ENCODE measurements at regions of chr6 and their contacts with region 1.

Region 1: GRCh38 chr6:24991810-24992467 is 56.2 kb upstream of the RIPOR2 start:
- DNase-seq: peak; percentile 46 to 89 (median 75)
- ATAC-seq: peak; percentile 87 to 93 (median 91)
- H3K4me3 ChIP-seq: no peak overlapping the region
- H3K4me3 Mint-ChIP-seq: peak overlapping the region; percentile 17 to 63 (median 47)
- H3K27ac ChIP-seq: peak overlapping the region; percentile 48
- H3K27ac Mint-ChIP-seq: peak overlapping the region; percentile 94
- H3K4me1 ChIP-seq: peaks cover 26 to 29% of the 10 kb centered on the region in 2 experiments
- H3K4me1 Mint-ChIP-seq: peaks cover 78 to 80% (median 78%) of the 10 kb centered on the region in 3 donors
- H3K27me3 ChIP-seq: no peaks in the 10 kb centered on the region
- H3K27me3 Mint-ChIP-seq: no peaks in the 10 kb centered on the region

Region 2: GRCh38 chr6:24864343-24864742 is 127.6 kb before region 1 on chr6:
- CTCF ChIA-PET with region 1: interaction called, 12 to 13 read pairs
- POLR2A ChIA-PET with region 1: interaction called, 3 to 5 read pairs
- DNase-seq: no peak
- ATAC-seq: no peak
- H3K4me3 ChIP-seq: no peak overlapping the region
- H3K4me3 Mint-ChIP-seq: peak overlapping the region in 1 of 3 donors; percentile 17
- H3K27ac ChIP-seq: peak overlapping the region; percentile 45
- H3K27ac Mint-ChIP-seq: peak overlapping the region; percentile 94 to 97
- H3K4me1 ChIP-seq: peaks cover 66 to 81% of the 10 kb centered on the region in 2 experiments
- H3K4me1 Mint-ChIP-seq: peaks cover 97 to 100% (median 97%) of the 10 kb centered on the region in 3 donors
- H3K27me3 ChIP-seq: no peaks in the 10 kb centered on the region
- H3K27me3 Mint-ChIP-seq: no peaks in the 10 kb centered on the region

Region 3: GRCh38 chr6:24910961-24911712 is 80.8 kb before region 1 on chr6:
- CTCF ChIA-PET with region 1: interaction called, 10 to 39 read pairs
- POLR2A ChIA-PET with region 1: interaction called in 1 of 2 experiments, 7 read pairs
- DNase-seq: peak in 30 of 35 experiments; percentile 29 to 72 (median 48)
- ATAC-seq: peak; percentile 32 to 50 (median 36)
- H3K4me3 ChIP-seq: peak overlapping the region; percentile 57 to 60
- H3K4me3 Mint-ChIP-seq: peak overlapping the region; percentile 88 to 93 (median 90)
- H3K27ac ChIP-seq: peak overlapping the region; percentile 79
- H3K27ac Mint-ChIP-seq: peak overlapping the region; percentile 98 to 99
- H3K4me1 ChIP-seq: peaks cover 74 to 87% of the 10 kb centered on the region in 2 experiments
- H3K4me1 Mint-ChIP-seq: peaks cover 96 to 100% (median 97%) of the 10 kb centered on the region in 3 donors
- H3K27me3 ChIP-seq: no peaks in the 10 kb centered on the region
- H3K27me3 Mint-ChIP-seq: no peaks in the 10 kb centered on the region

Region 4: GRCh38 chr6:24933868-24934401 is 58.0 kb before region 1 on chr6:
- CTCF ChIA-PET with region 1: interaction called, 48 to 160 read pairs
- POLR2A ChIA-PET with region 1: interaction called, 12 to 22 read pairs
- DNase-seq: peak in 17 of 35 experiments; percentile 26 to 82 (median 49)
- ATAC-seq: peak in 3 of 4 experiments; percentile 8 to 23 (median 12)
- H3K4me3 ChIP-seq: peak overlapping the region; percentile 93 to 94
- H3K4me3 Mint-ChIP-seq: peak overlapping the region; percentile 93 to 98 (median 96)
- H3K27ac ChIP-seq: peak overlapping the region; percentile 65
- H3K27ac Mint-ChIP-seq: peak overlapping the region; percentile 97 to 100
- H3K4me1 ChIP-seq: peaks cover 39 to 55% of the 10 kb centered on the region in 2 experiments
- H3K4me1 Mint-ChIP-seq: peaks cover 55 to 73% (median 62%) of the 10 kb centered on the region in 3 donors
- H3K27me3 ChIP-seq: no peaks in the 10 kb centered on the region
- H3K27me3 Mint-ChIP-seq: no peaks in the 10 kb centered on the region

Region 5: DNA sequence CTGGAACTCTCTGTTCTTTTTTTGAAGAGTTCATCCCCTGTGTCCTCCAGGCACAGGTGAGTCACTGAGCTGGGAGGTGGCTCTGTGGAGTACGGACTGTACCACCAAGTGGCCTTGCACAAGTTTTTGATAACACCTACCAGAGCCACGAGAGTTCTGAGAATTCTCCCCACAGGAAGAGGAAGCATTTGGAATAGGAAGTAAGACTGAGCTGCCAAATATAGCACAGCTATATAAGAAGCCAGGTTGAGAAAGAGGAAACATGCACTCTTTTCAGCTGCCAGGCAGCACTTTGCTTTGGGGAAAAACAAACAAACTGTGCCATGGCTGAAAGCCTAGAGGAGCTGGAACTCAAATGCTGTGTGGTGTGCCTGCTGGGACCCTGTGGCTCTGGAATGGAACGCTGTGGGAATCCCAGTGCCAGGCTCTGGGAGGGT is 14.6 kb after region 1 on chr6:
- CTCF ChIA-PET with region 1: interaction called, 3 to 22 read pairs
- POLR2A ChIA-PET with region 1: no interaction called
- DNase-seq: peak in 16 of 35 experiments; percentile 7 to 54 (median 20)
- ATAC-seq: peak; percentile 72 to 80 (median 75)
- H3K4me3 ChIP-seq: peak overlapping the region in 1 of 2 donors; percentile 20
- H3K4me3 Mint-ChIP-seq: peak overlapping the region in 2 of 3 donors; percentile 38 to 68
- H3K27ac ChIP-seq: peak overlapping the region; percentile 84
- H3K27ac Mint-ChIP-seq: peak overlapping the region; percentile 88 to 91
- H3K4me1 ChIP-seq: peaks cover 49 to 61% of the 10 kb centered on the region in 2 experiments
- H3K4me1 Mint-ChIP-seq: peaks cover 79 to 99% (median 80%) of the 10 kb centered on the region in 3 donors
- H3K27me3 ChIP-seq: no peaks in the 10 kb centered on the region
- H3K27me3 Mint-ChIP-seq: no peaks in the 10 kb centered on the region

Region 6: GRCh38 chr6:25056130-25056529 is 64.2 kb after region 1 on chr6:
- CTCF ChIA-PET with region 1: interaction called in 1 of 2 experiments, 5 read pairs
- POLR2A ChIA-PET with region 1: interaction called in 1 of 2 experiments, 11 read pairs
- DNase-seq: peak; percentile 31 to 89 (median 63)
- ATAC-seq: peak; percentile 79 to 99 (median 97)
- H3K4me3 ChIP-seq: peak overlapping the region; percentile 18 to 30
- H3K4me3 Mint-ChIP-seq: peak overlapping the region; percentile 22 to 66 (median 50)
- H3K27ac ChIP-seq: peak overlapping the region; percentile 72
- H3K27ac Mint-ChIP-seq: peak overlapping the region; percentile 87 to 94
- H3K4me1 ChIP-seq: peaks cover 21 to 55% of the 10 kb centered on the region in 2 experiments
- H3K4me1 Mint-ChIP-seq: peaks cover 40 to 66% (median 64%) of the 10 kb centered on the region in 3 donors
- H3K27me3 ChIP-seq: no peaks in the 10 kb centered on the region
- H3K27me3 Mint-ChIP-seq: no peaks in the 10 kb centered on the region